ENCODE measurements at regions of chr1 and their contacts with region 1.

Region 1: GRCh38 chr1:89719502-89720306 is 86.8 kb downstream of the LRRC8C start:
- DNase-seq: peak in 1 of 4 experiments; percentile 34
- ATAC-seq: peak; percentile 77
- H3K4me3 ChIP-seq: no peak overlapping the region
- H3K27ac ChIP-seq: peak overlapping the region; percentile 47; the same call in 1 of the 3 replicates
- H3K4me1 ChIP-seq: peaks cover 0 to 13% of the 10 kb centered on the region in 2 experiments
- H3K27me3 ChIP-seq: no peaks in the 10 kb centered on the region
- CTCF ChIP-seq: no peak
- EP300 ChIP-seq: no peak
- POLR2A ChIP-seq: no peak
- RAD21 ChIP-seq: no peak

Region 2: GRCh38 chr1:89762779-89763648 is 43.3 kb after region 1 on chr1:
- CTCF ChIA-PET with region 1: no interaction called
- POLR2A ChIA-PET with region 1: interaction called, 3 read pairs
- in situ Hi-C with region 1: no loop called
- intact Hi-C with region 1: loop called (anchors 2 kb)
- DNase-seq: peak; percentile 88 to 92 (median 90)
- ATAC-seq: peak; percentile 100
- H3K4me3 ChIP-seq: peak overlapping the region; percentile 36
- H3K27ac ChIP-seq: peak overlapping the region; percentile 35; the same call in 1 of the 3 replicates
- H3K4me1 ChIP-seq: peaks cover 15 to 17% of the 10 kb centered on the region in 2 experiments
- H3K27me3 ChIP-seq: no peaks in the 10 kb centered on the region; a peak in 1 of 5 replicates
- CTCF ChIP-seq: peak; percentile 96 to 98 (median 97)
- EP300 ChIP-seq: peak; percentile 46; the same call in 1 of the 2 replicates
- POLR2A ChIP-seq: no peak
- RAD21 ChIP-seq: peak; percentile 98 to 99